Activated CD4-positive, alpha-beta T cell treated with anti-CD3 and anti-CD28 coated beads, Interleukin-2, amount 10 ng/mL, durations not matched to agents 24 days and 14 days (primary cell): ENCODE measurements at regions of chr13 and their contacts with region 1.

Region 1: GRCh38 chr13:94416454-94417080 is 62.9 kb downstream of the DCT start:
- DNase-seq: no peak
- H3K4me3 Mint-ChIP-seq: no peak overlapping the region
- H3K27ac Mint-ChIP-seq: peak overlapping the region; percentile 39
- H3K4me1 Mint-ChIP-seq: peaks cover 21% of the 10 kb centered on the region
- H3K27me3 Mint-ChIP-seq: no peaks in the 10 kb centered on the region

Region 2: DNA sequence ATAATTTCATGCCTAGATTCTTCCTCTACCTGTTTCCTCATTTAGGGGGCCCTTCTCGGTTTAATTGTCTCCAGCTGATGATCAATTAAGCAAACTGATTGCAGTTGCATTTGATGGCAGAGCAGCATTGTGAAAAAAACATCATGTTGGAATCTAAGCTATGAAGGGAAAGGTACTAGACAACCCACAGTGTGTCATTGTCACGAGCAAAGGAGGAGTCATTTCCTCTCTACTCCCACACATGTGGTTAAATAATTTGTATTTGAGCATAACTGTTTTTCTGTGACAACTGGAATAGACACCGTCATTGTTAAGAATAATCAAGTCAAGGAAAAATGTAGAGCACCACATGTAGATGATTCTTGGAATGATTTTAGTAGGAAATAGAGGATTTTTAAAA is 177.4 kb before region 1 on chr13:
- intact Hi-C with region 1: loop called (anchors 5 kb)
- DNase-seq: peak; percentile 60
- H3K4me3 Mint-ChIP-seq: no peak overlapping the region
- H3K27ac Mint-ChIP-seq: no peak overlapping the region
- H3K4me1 Mint-ChIP-seq: peaks cover 29% of the 10 kb centered on the region
- H3K27me3 Mint-ChIP-seq: peaks cover under 1% of the 10 kb centered on the region

Region 3: GRCh38 chr13:94351292-94351990 is 65.1 kb before region 1 on chr13:
- intact Hi-C with region 1: loop called (anchors 1 kb)
- DNase-seq: no peak
- H3K4me3 Mint-ChIP-seq: no peak overlapping the region
- H3K27ac Mint-ChIP-seq: peak overlapping the region; percentile 5
- H3K4me1 Mint-ChIP-seq: peaks cover 19% of the 10 kb centered on the region
- H3K27me3 Mint-ChIP-seq: peaks cover 4% of the 10 kb centered on the region

Region 4: GRCh38 chr13:94595950-94596574 is 179.5 kb after region 1 on chr13 and contains the start of gene TGDS:
- intact Hi-C with region 1: loop called (anchors 2 kb)
- DNase-seq: peak; percentile 97
- H3K4me3 Mint-ChIP-seq: peak within 1 kb of the TSS; percentile 93
- H3K27ac Mint-ChIP-seq: peak within 1 kb of the TSS; percentile 97
- H3K4me1 Mint-ChIP-seq: peaks cover 34% of the 10 kb centered on the region
- H3K27me3 Mint-ChIP-seq: no peaks in the 10 kb centered on the region
- total RNA-seq, gene TGDS: 27.5 and 31.0 TPM in 2 replicates

Region 5: DNA sequence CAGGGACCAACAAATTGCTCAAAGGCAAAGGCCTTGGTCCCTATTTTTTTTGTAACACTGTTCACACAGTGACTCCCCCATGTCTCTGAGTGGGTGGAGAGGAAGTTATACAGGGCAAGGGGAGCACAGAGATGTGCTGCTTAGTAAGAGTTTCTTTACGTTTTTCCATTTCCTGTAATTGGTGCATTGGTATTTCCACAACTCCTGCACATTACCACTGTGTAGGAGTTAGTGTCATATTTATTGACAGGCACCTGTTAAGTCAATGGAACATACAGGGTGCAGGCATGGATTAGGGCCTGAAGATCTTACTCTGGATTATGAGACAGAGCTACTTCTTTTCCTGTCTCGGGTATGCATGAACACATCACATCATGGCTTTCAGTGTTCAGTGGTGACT is 250.6 kb after region 1 on chr13:
- intact Hi-C with region 1: loop called (anchors 1 kb)
- DNase-seq: peak; percentile 59
- H3K4me3 Mint-ChIP-seq: peak overlapping the region; percentile 39
- H3K27ac Mint-ChIP-seq: peak overlapping the region; percentile 92
- H3K4me1 Mint-ChIP-seq: peaks cover 32% of the 10 kb centered on the region
- H3K27me3 Mint-ChIP-seq: peaks cover 13% of the 10 kb centered on the region